Activated CD8-positive, alpha-beta T cell treated with anti-CD3 and anti-CD28 coated beads for 36 hours (primary cell): ENCODE measurements at regions of chr11 and their contacts with region 1.

Region 1: GRCh38 chr11:114059278-114059983 is at the start of gene ZBTB16:
- DNase-seq: peak; percentile 59
- ATAC-seq: peak; percentile 71
- H3K4me3 Mint-ChIP-seq: peak within 1 kb of the TSS; percentile 72
- H3K27ac Mint-ChIP-seq: no peak within 1 kb of the TSS
- H3K4me1 Mint-ChIP-seq: peaks cover 3% of the 10 kb centered on the region
- H3K27me3 Mint-ChIP-seq: peaks cover 38% of the 10 kb centered on the region
- CTCF ChIP-seq: no peak
- total RNA-seq, gene ZBTB16: 9.5 to 10.1 TPM

Region 2: DNA sequence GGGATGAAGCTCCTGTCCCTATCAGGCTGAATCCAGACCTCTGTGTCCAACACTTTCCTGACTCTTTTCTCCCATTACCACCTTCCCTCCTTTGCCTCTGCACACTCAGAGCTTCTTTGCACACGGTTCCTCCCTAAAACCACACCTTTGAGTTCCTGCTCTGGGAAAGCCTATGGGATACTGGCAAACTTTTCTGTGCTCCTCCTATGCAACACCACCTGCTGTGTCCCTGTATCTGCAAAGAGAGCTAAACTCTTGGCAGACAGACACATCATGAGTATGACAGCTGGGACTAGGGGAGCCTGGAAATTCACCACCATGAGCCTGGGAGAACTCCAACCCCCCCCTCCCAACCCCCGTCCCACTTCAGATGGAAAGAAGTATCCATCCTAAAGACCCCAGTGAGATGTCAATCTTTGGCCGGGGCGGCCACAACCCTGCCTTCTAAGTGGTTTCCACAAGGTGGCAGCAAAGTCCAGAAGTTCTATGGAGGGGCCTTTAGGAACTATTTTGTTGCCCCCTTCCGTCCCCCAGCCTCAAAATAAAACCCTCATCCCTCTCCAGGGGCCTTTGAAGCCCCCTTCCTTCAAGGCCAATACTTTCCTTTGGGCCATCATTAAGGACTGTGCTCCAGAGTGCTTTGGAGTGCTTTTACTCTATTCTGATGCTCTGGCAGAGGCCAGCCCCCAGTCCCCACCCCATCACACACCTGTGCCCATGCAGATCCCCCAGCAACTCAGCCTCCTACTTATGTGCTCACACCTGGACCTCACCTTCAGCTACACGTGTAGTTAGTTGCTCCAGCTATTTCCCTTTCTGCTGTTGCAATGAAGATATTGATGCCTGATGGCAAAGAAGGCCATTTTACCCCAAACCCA is 65.1 kb before region 1 on chr11:
- CTCF ChIA-PET with region 1: no interaction called
- POLR2A ChIA-PET with region 1: no interaction called
- intact Hi-C with region 1: loop called (anchors 10 kb)
- DNase-seq: peak; percentile 40
- ATAC-seq: no peak
- H3K4me3 Mint-ChIP-seq: no peak overlapping the region
- H3K27ac Mint-ChIP-seq: no peak overlapping the region
- H3K4me1 Mint-ChIP-seq: no peaks in the 10 kb centered on the region
- H3K27me3 Mint-ChIP-seq: peaks cover 24% of the 10 kb centered on the region
- CTCF ChIP-seq: peak; percentile 71